ENCODE measurements at regions of chr2 and their contacts with region 1.

Region 1: DNA sequence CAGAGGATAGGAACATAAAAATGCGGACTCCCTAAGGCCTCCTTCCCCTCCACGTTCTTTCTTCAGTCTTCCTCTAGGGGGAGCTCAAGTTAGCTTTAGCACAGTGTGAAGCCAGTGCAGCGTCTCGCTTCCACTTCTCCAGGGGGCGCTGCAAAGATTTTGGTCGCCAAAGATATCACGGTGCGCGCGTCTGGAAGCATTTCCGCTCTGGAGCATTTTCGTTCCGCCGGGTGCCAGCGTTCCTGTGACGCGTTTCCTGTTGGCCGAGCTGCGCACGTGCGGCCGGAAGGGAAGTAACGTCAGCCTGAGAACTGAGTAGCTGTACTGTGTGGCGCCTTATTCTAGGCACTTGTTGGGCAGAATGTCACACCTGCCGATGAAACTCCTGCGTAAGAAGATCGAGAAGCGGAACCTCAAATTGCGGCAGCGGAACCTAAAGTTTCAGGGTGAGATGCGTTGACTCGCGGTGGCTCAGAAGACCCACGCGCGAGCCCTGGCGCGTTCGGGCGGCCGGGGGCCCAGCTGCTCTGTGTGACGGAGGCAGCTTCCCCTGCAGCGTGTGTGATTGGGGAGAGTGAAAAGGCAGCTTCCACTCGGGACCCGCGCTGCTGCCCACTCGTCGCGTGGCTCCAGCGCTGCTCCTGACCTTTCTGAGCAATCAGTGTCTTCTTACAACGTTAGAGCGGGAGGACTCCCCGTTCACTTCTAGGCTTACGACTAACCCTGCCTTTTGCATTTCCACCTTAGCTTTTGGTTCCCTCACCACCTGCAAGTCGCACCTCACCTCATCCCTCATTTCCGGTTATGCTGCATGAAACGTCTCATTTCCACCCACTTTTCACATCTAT is at the start of gene DDX18:
- DNase-seq: peak; percentile 50 to 98
- ATAC-seq: peak; percentile 99
- H3K4me3 ChIP-seq: peak within 1 kb of the TSS; percentile 85
- H3K27ac ChIP-seq: peak within 1 kb of the TSS; percentile 86 to 88
- H3K4me1 ChIP-seq: peaks cover 15% of the 10 kb centered on the region; the same call in 2 of the 3 replicates
- CTCF ChIP-seq: peak; percentile 99
- EP300 ChIP-seq: no peak
- POLR2A ChIP-seq: peak; percentile 75
- RAD21 ChIP-seq: peak; percentile 79 to 84
- polyA plus RNA-seq, gene DDX18: 106 and 115 TPM in 2 replicates

Region 2: GRCh38 chr2:116924509-116924908 is 890.1 kb before region 1 on chr2:
- CTCF ChIA-PET with region 1: no interaction called
- POLR2A ChIA-PET with region 1: no interaction called
- DNase-seq: no peak
- ATAC-seq: no peak
- H3K4me3 ChIP-seq: no peak overlapping the region
- H3K27ac ChIP-seq: no peak overlapping the region
- H3K4me1 ChIP-seq: no peaks in the 10 kb centered on the region
- CTCF ChIP-seq: no peak
- EP300 ChIP-seq: no peak
- POLR2A ChIP-seq: no peak
- RAD21 ChIP-seq: no peak

Region 3: DNA sequence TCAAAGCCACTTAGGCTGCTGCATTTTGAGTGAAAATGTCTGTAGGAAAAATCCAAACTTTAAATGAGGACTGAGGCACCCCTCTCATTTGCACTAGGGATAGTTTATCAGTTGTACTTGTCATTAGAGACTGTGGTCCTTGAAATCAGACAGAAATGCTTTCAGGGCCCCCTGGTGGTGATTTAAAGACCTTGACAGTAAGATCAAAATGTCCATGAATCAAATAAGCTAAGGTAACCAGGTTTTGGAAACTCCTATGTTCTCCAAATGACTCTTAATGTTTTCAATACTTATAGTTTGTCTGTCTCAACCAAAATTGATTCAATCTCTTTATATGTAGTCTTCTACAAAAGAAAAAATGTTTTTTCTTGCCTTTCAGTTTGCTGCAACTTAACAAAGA is 28.9 kb before region 1 on chr2:
- CTCF ChIA-PET with region 1: interaction called, 13 read pairs
- POLR2A ChIA-PET with region 1: no interaction called
- DNase-seq: peak; percentile 15 to 54
- ATAC-seq: peak in 1 of 2 experiments; percentile 76; a peak in 3 of 6 replicates
- H3K4me3 ChIP-seq: no peak overlapping the region
- H3K27ac ChIP-seq: no peak overlapping the region
- H3K4me1 ChIP-seq: no peaks in the 10 kb centered on the region
- CTCF ChIP-seq: peak; percentile 68
- EP300 ChIP-seq: no peak
- POLR2A ChIP-seq: no peak
- RAD21 ChIP-seq: peak; percentile 48 to 59; a peak in 3 of 5 replicates

Region 4: GRCh38 chr2:117828870-117829269 is 14.2 kb after region 1 on chr2:
- CTCF ChIA-PET with region 1: interaction called, 37 read pairs
- POLR2A ChIA-PET with region 1: no interaction called
- DNase-seq: no peak
- ATAC-seq: no peak
- H3K4me3 ChIP-seq: no peak overlapping the region
- H3K27ac ChIP-seq: no peak overlapping the region
- H3K4me1 ChIP-seq: 0 out of 3 replicates have a peak, but pooled peaks cover 9% of the 10 kb centered on the region
- CTCF ChIP-seq: no peak
- EP300 ChIP-seq: no peak
- POLR2A ChIP-seq: no peak
- RAD21 ChIP-seq: no peak

Region 5: DNA sequence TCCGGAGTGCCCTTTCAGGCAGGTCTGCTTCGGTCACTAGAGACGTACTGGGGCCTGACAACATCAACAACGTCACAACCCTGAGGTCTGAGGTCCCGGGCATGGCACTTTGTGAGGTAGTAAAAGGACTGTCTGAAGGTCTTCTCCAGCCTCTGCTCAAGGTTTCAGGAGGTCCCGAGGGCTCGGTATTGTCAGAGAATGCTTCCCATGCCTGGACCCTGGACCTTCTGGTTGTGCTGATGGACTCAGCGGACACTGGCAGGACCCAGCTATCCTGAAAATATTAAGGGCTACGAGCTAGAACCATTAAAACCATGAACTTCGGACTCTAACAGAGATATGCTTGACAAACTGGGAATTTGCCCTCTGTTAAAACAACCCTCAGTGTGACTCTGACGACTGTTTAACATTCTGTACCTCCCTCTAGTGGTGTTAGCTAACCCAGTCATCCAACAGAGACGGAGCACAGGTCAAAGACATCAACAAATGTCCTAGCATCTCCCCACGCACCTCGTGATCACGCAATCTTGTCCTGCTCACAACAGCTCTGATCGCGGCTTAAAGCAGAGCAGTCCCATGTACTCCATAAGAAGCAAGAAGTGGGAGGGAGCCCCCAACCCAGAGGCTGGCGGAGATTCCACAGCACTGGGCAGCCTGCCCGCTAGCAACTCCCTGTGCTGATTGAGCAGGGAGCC is 102.7 kb after region 1 on chr2:
- CTCF ChIA-PET with region 1: interaction called, 13 read pairs
- POLR2A ChIA-PET with region 1: no interaction called
- DNase-seq: peak; percentile 5 to 12
- ATAC-seq: peak; percentile 69 to 86; a peak in 4 of 6 replicates
- H3K4me3 ChIP-seq: no peak overlapping the region
- H3K27ac ChIP-seq: no peak overlapping the region
- H3K4me1 ChIP-seq: no peaks in the 10 kb centered on the region
- CTCF ChIP-seq: no peak
- EP300 ChIP-seq: no peak
- POLR2A ChIP-seq: no peak
- RAD21 ChIP-seq: peak; percentile 23 to 46; a peak in 3 of 5 replicates

Region 6: GRCh38 chr2:117997872-117998454 is 183.3 kb after region 1 on chr2:
- CTCF ChIA-PET with region 1: interaction called, 137 read pairs
- POLR2A ChIA-PET with region 1: interaction called, 7 read pairs
- DNase-seq: no peak
- ATAC-seq: no peak
- H3K4me3 ChIP-seq: no peak overlapping the region
- H3K27ac ChIP-seq: no peak overlapping the region
- H3K4me1 ChIP-seq: no peaks in the 10 kb centered on the region
- CTCF ChIP-seq: no peak
- EP300 ChIP-seq: no peak
- POLR2A ChIP-seq: no peak
- RAD21 ChIP-seq: no peak

Measured in A549 (cell line).